ENCODE measurements at regions of chr1 and their contacts with region 1.

Region 1: GRCh38 chr1:246647113-246647512 is 77.1 kb upstream of the SCCPDH start:
- DNase-seq: peak; percentile 67 to 88 (median 87)
- ATAC-seq: peak; percentile 96
- H3K4me3 ChIP-seq: peak overlapping the region; percentile 33
- H3K27ac ChIP-seq: peak overlapping the region; percentile 70
- H3K4me1 ChIP-seq: peaks cover 2% of the 10 kb centered on the region
- H3K27me3 ChIP-seq: no peaks in the 10 kb centered on the region

Region 2: DNA sequence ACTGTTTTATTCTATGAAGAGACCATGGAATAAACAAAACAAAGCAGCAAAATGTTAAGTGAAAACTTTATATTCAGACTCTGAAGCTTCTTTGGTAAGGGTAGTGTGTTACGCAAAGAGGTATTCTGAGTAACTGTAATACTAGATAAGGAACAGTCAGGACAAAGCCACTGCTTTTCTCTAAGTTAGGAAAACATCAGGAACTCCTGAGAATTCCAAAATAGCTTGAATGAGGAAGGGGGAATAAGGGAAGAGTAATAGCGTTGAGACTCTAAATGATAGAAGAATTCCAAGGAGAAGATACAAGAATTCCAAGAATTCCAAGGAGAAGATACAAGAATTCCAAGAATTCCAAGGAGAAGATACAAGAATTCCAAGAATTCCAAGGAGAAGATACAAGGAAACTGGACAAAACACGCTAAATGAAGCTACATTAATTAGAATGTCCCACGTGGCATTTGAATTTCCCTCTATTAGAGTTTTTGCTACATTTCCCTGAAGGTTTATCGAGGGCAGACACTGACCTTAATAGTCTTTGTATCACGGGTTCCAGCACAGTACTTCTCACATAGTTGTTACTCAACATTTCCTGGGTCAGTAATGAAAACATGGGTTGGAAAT is 211.6 kb before region 1 on chr1:
- intact Hi-C with region 1: no loop called
- DNase-seq: no peak
- ATAC-seq: no peak
- H3K4me3 ChIP-seq: no peak overlapping the region
- H3K27ac ChIP-seq: no peak overlapping the region
- H3K4me1 ChIP-seq: no peaks in the 10 kb centered on the region
- H3K27me3 ChIP-seq: no peaks in the 10 kb centered on the region

Region 3: GRCh38 chr1:246681900-246682299 is 34.8 kb after region 1 on chr1:
- intact Hi-C with region 1: loop called in 1 of 4 experiments (anchors 5 kb)
- DNase-seq: peak; percentile 61 to 89 (median 83)
- ATAC-seq: peak; percentile 67 to 73
- H3K4me3 ChIP-seq: no peak overlapping the region
- H3K27ac ChIP-seq: peak overlapping the region; percentile 59
- H3K4me1 ChIP-seq: peaks cover 9% of the 10 kb centered on the region
- H3K27me3 ChIP-seq: no peaks in the 10 kb centered on the region

Measured in right cardiac atrium (tissue), 5 donors.